ENCODE measurements at regions of chr7 and their contacts with region 1.

Region 1: GRCh38 chr7:31633894-31634494 is 53.0 kb upstream of the PPP1R17 start:
- ATAC-seq: peak; percentile 58 to 96 (median 82)
- H3K4me3 ChIP-seq: no peak overlapping the region
- H3K27ac ChIP-seq: no peak overlapping the region
- H3K4me1 ChIP-seq: no peaks in the 10 kb centered on the region

Region 2: GRCh38 chr7:30983042-30983913 is 650.7 kb before region 1 on chr7:
- in situ Hi-C with region 1: loop called in 1 of 9 experiments (anchors 25 kb)
- ATAC-seq: peak; percentile 59 to 97 (median 80)
- H3K4me3 ChIP-seq: peak overlapping the region in 2 of 5 donors; percentile 14 to 15
- H3K27ac ChIP-seq: no peak overlapping the region
- H3K4me1 ChIP-seq: peaks cover 25 to 35% of the 10 kb centered on the region in 2 donors

Region 3: DNA sequence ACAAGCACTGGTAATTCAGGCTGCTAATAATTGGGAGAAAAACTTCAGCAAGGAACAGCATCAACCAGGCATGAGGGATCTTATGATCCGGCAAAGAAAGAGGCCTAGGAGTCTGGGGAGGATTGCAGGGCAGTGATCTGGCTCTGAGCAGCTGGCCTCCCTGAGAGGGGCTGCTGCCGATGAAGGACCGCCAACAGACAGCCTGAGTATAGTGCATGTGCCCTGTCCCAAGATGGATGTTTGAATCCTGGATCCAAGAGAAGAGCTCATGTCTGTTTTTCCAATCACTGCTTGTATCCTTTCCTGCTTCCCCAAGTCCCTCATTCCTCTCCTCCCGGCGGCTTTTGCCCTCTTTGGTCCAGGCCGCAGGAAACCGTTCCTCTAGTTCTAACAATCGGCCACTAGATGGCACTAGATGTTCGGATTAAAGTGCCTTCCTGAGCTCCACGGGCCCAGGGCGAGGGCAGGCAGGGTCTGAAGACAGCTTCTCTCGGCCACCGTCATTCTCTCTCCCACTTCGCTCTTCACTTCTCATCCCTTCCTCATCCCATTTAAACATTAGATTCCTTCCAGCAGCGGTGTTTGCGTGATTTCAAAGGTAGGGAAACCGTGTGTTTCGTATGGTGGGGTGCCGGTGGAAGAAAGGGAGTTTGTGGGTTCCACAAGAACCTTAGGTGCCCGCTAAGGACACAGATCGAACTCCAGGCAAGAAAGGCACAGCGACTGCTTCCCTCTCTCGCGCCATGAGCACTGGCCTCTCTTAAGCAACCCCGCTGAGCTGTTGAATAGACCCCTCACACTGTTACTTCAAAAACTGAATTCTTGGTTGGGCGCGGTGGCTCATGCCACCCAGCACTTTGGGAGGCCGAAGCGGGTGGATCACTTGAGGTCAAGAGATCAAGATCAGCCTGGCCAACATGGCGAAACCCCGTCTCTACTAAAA is 499.5 kb before region 1 on chr7:
- in situ Hi-C with region 1: loop called in 4 of 9 experiments (anchors 25 kb)
- ATAC-seq: peak; percentile 99 to 100 (median 100)
- H3K4me3 ChIP-seq: no peak overlapping the region
- H3K27ac ChIP-seq: no peak overlapping the region
- H3K4me1 ChIP-seq: no peaks in the 10 kb centered on the region

Region 4: DNA sequence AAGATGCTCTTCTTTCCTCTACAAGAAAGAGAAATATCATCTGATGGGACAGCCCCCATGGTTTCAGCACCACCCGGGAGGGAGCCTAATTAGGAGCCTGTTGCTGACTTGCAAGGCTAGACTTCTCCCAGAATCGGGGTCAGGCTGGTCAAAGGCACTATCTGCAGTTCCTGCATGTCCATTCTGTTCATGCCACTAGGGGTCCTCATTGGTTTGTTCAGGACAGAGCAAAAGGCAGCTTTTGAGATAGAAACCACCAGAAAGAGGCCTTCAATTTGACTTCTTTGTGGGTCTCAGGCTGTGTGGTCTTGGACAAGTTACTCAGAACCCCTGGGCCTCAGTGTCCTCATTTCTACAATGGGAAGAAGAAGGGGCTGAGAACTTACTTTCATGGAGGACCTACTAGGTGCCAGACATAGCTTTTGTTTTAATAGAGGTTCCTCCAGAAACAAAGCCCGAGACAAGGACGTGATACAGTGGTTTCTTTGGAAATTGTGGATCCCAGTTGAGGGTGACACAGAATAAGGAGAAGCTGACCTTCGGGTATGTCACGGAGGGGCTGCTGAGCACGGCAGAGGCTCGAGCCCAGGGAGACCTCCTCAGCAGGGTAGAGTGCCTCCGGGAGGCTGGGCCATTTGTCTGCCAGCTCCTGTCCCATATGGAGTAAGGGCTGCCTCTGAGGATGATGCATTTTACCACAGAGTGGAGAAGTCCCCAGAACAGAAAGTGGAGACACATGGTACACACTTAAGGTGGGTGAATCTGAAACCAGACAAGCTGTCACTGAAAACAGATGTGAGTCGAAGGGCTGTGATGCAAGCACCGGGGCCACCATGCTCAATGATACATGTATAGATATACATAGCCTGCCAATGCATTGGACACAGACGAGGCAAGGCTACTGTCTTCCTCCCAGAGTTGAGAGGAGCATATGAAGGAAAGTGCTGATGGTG is 260.4 kb before region 1 on chr7:
- in situ Hi-C with region 1: loop called in 1 of 9 experiments (anchors 25 kb)
- ATAC-seq: peak in 5 of 8 experiments; percentile 42 to 96 (median 89)
- H3K4me3 ChIP-seq: no peak overlapping the region
- H3K27ac ChIP-seq: no peak overlapping the region
- H3K4me1 ChIP-seq: no peaks in the 10 kb centered on the region

Region 5: DNA sequence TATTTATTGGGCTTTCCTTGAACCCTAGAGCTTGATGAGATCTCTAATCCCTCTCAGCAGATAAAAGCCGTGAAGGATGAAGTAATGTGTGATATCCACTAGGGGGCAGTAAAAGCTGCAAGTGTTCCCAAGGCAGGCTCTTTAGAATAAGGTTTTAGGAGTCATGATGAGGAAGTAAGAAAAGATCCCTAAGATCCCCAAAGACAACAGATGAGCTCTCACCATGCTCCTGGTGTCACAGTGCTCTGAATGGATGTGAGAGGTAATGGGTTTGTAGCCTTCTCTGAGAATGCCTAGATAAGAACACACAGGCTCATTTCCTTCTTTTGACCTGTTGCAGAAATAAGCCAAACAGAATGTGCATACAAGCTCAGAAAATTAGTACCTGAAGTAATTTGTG is 190.5 kb before region 1 on chr7:
- in situ Hi-C with region 1: loop called in 7 of 9 experiments (anchors 10 to 25 kb)
- ATAC-seq: peak; percentile 44 to 78 (median 68)
- H3K4me3 ChIP-seq: no peak overlapping the region
- H3K27ac ChIP-seq: no peak overlapping the region
- H3K4me1 ChIP-seq: no peaks in the 10 kb centered on the region

Region 6: GRCh38 chr7:31763548-31763947 is 129.6 kb after region 1 on chr7:
- in situ Hi-C with region 1: no loop called
- ATAC-seq: no peak
- H3K4me3 ChIP-seq: no peak overlapping the region
- H3K27ac ChIP-seq: no peak overlapping the region
- H3K4me1 ChIP-seq: no peaks in the 10 kb centered on the region